ENCODE measurements at regions of chr13 and their contacts with region 1.

Region 1: GRCh38 chr13:77697217-77698103 is at the start of gene SLAIN1:
- DNase-seq: peak; percentile 88
- ATAC-seq: peak; percentile 73
- H3K4me3 Mint-ChIP-seq: peak within 1 kb of the TSS; percentile 95
- H3K27ac Mint-ChIP-seq: peak within 1 kb of the TSS; percentile 60
- H3K4me1 Mint-ChIP-seq: peaks cover 35% of the 10 kb centered on the region
- H3K27me3 Mint-ChIP-seq: no peaks in the 10 kb centered on the region
- total RNA-seq, gene SLAIN1: 26.7 to 39.8 TPM

Region 2: GRCh38 chr13:76991796-76992547 is 705.5 kb before region 1 on chr13 and contains the start of gene CLN5:
- CTCF ChIA-PET with region 1: no interaction called
- POLR2A ChIA-PET with region 1: no interaction called
- intact Hi-C with region 1: loop called (anchors 5 kb)
- DNase-seq: peak; percentile 97
- ATAC-seq: peak; percentile 93
- H3K4me3 Mint-ChIP-seq: peak within 1 kb of the TSS; percentile 97
- H3K27ac Mint-ChIP-seq: peak within 1 kb of the TSS; percentile 99
- H3K4me1 Mint-ChIP-seq: peaks cover 36% of the 10 kb centered on the region
- H3K27me3 Mint-ChIP-seq: peaks cover 3% of the 10 kb centered on the region
- total RNA-seq, gene CLN5: 14.5 to 14.9 TPM

Region 3: DNA sequence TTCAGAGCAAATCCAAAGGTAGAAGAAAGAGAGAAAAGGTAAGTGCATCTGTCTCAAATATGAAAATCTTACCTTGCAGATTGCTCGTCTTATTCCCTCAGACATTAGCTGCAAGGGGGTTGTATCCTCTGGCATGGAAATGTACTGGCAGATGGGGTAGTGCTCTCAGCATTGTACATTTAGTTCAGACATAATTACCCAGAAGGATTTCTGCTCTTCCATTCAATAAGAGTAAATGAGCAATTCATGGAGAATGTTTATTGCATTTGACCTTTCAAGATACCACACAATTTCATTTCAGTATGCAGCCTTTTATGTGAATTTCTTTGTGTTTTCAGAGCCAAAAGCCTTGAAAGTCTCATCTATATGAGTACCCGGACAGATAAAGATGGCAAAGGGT is 98.1 kb before region 1 on chr13:
- CTCF ChIA-PET with region 1: no interaction called
- POLR2A ChIA-PET with region 1: no interaction called
- intact Hi-C with region 1: loop called in 1 of 2 experiments (anchors 5 kb)
- DNase-seq: no peak
- ATAC-seq: no peak
- H3K4me3 Mint-ChIP-seq: no peak overlapping the region
- H3K27ac Mint-ChIP-seq: no peak overlapping the region
- H3K4me1 Mint-ChIP-seq: no peaks in the 10 kb centered on the region
- H3K27me3 Mint-ChIP-seq: peaks cover 11% of the 10 kb centered on the region

Region 4: DNA sequence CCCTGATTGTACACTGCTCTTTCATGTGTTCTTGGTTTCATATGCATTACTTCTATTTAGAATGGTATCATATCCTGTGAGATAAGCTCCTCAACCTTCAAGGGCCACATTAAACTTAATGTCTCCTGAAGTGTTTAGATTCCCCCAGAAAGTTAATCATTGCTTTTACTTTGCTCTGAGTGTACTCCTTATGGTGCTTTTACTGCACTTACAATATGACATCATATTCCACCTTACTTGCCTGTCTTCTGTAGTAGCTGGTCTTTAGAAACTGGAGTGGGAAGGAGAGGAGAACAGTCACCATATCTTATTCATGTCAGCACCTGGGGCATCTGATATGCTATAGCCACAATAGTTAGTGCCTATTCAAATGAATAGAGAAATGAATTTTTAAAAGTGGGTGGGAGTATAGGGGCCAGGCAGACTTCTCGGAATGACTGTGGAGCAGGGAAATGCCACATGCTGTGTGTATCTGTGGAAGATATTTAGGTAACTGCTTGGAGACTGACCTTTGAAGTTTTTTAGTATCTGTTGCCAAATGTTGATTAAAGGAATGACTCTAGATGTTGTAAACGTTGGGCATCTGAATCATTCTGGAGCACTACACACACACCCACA is 40.2 kb after region 1 on chr13:
- CTCF ChIA-PET with region 1: interaction called, 6 read pairs
- POLR2A ChIA-PET with region 1: interaction called, 3 read pairs
- intact Hi-C with region 1: loop called in 1 of 2 experiments (anchors 5 kb)
- DNase-seq: peak; percentile 44
- ATAC-seq: peak; percentile 93
- H3K4me3 Mint-ChIP-seq: no peak overlapping the region
- H3K27ac Mint-ChIP-seq: no peak overlapping the region
- H3K4me1 Mint-ChIP-seq: peaks cover 21% of the 10 kb centered on the region
- H3K27me3 Mint-ChIP-seq: no peaks in the 10 kb centered on the region

Region 5: DNA sequence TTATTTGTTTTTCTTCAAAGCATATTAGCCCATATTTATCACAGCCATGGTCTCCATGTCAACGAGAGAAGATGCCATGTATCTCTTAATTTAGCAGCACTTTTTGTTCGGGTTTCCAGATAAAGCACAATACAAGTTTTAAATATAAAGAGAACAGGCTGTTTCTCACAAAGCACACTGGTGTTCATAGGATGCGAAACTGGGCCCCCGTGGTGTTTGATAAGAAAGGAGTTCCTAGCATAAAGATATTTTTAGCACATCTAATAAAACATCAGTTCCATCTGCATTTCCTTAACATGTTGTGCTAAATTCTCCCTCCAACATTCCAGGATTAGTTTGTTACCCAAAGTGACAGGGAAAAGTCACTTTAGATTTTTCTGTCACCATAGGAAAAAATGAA is 293.5 kb after region 1 on chr13:
- CTCF ChIA-PET with region 1: no interaction called
- POLR2A ChIA-PET with region 1: no interaction called
- intact Hi-C with region 1: no loop called
- DNase-seq: no peak
- ATAC-seq: no peak
- H3K4me3 Mint-ChIP-seq: no peak overlapping the region
- H3K27ac Mint-ChIP-seq: no peak overlapping the region
- H3K4me1 Mint-ChIP-seq: no peaks in the 10 kb centered on the region
- H3K27me3 Mint-ChIP-seq: no peaks in the 10 kb centered on the region

Region 6: DNA sequence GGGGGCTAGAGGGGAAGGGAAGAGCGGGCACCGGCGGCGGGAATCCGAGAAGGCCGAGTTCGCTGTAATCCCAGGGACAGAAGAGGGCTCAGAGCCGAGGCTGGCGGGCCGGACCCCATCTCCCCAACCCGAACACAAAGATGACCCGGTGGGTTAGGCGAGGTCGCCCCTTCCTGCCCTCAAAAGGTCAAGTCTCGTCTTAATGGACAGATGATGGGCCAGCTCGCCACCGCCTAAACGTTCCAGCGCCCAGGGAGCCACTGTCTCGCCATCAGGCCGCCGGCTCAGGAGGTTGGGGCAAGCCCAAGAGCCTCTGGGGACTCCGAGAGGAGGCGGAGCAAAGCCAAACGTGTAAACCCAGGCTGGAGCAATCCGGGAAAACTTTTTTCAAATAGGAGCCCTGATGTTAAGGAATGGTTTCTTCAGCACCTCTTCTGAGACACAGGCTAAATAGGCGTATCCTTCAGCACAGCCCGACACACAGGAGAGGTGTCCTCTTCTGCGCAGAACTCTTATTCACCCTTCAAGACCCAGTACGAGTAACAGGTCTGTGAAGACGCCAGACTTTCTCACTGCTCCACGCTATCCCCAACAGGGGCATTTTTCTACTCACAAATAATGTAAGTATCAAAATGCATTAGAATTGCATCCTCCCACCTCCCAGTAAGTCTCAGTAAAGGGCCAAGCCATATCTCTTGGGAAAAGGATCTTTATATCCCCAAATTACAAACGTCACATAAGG is 912.2 kb after region 1 on chr13:
- CTCF ChIA-PET with region 1: no interaction called
- POLR2A ChIA-PET with region 1: no interaction called
- intact Hi-C with region 1: loop called in 1 of 2 experiments (anchors 5 kb)
- DNase-seq: no peak
- ATAC-seq: no peak
- H3K4me3 Mint-ChIP-seq: peak overlapping the region; percentile 56
- H3K27ac Mint-ChIP-seq: no peak overlapping the region
- H3K4me1 Mint-ChIP-seq: peaks cover 28% of the 10 kb centered on the region
- H3K27me3 Mint-ChIP-seq: peaks cover 63% of the 10 kb centered on the region